Endothelial cell of umbilical vein (primary cell): ENCODE measurements at regions of chr9 and their contacts with region 1.

Region 1: GRCh38 chr9:32136700-32137339 is 247.6 kb upstream of the ACO1 start:
- DNase-seq: no peak
- H3K4me3 ChIP-seq: no peak overlapping the region
- H3K27ac ChIP-seq: no peak overlapping the region
- H3K4me1 ChIP-seq: no peaks in the 10 kb centered on the region
- H3K27me3 ChIP-seq: no peaks in the 10 kb centered on the region
- CTCF ChIP-seq: no peak
- POLR2A ChIP-seq: no peak

Region 2: GRCh38 chr9:31790725-31791124 is 346.1 kb before region 1 on chr9:
- CTCF ChIA-PET with region 1: no interaction called
- POLR2A ChIA-PET with region 1: no interaction called
- dilution Hi-C with region 1: no loop called
- intact Hi-C with region 1: no loop called
- DNase-seq: no peak
- H3K4me3 ChIP-seq: no peak overlapping the region
- H3K27ac ChIP-seq: no peak overlapping the region
- H3K4me1 ChIP-seq: no peaks in the 10 kb centered on the region
- H3K27me3 ChIP-seq: no peaks in the 10 kb centered on the region
- CTCF ChIP-seq: no peak
- POLR2A ChIP-seq: no peak

Region 3: GRCh38 chr9:32069969-32070368 is 66.9 kb before region 1 on chr9:
- CTCF ChIA-PET with region 1: no interaction called
- POLR2A ChIA-PET with region 1: no interaction called
- dilution Hi-C with region 1: no loop called
- intact Hi-C with region 1: loop called (anchors 10 kb)
- DNase-seq: no peak
- H3K4me3 ChIP-seq: no peak overlapping the region
- H3K27ac ChIP-seq: no peak overlapping the region
- H3K4me1 ChIP-seq: no peaks in the 10 kb centered on the region
- H3K27me3 ChIP-seq: no peaks in the 10 kb centered on the region
- CTCF ChIP-seq: no peak
- POLR2A ChIP-seq: no peak

Region 4: GRCh38 chr9:32631991-32632390 is 495.2 kb after region 1 on chr9:
- CTCF ChIA-PET with region 1: no interaction called
- POLR2A ChIA-PET with region 1: no interaction called
- dilution Hi-C with region 1: no loop called
- intact Hi-C with region 1: loop called (anchors 5 kb)
- DNase-seq: no peak
- H3K4me3 ChIP-seq: no peak overlapping the region
- H3K27ac ChIP-seq: no peak overlapping the region
- H3K4me1 ChIP-seq: no peaks in the 10 kb centered on the region
- H3K27me3 ChIP-seq: peaks cover 0 to 5% of the 10 kb centered on the region in 2 experiments
- CTCF ChIP-seq: no peak
- POLR2A ChIP-seq: no peak